GM10248 (cell line): ENCODE measurements at regions of chr10 and their contacts with region 1.

Region 1: DNA sequence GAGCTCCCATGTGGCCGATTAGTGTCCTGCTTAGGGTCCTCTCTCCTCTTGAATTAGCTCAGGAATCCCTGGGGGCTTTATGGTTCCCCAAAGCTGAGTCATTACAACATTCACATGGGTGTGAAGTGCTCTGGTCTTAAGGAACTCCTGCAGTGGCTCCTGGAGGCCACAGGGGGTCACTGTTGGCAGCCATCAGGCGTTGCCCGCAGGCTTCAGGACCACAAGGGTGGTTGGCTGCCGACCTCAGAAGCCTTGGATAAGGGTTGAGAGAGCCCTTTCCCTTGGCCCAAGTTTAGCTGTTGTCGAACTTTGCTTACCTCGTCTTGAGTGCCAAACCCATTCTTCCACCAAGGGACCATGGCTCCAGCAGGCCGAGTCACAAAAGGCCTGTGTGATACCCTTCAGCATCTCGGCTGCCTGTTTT is 61.7 kb downstream of the SH2D4B start:
- DNase-seq: peak; percentile 76
- CTCF ChIP-seq: peak; percentile 85

Region 2: DNA sequence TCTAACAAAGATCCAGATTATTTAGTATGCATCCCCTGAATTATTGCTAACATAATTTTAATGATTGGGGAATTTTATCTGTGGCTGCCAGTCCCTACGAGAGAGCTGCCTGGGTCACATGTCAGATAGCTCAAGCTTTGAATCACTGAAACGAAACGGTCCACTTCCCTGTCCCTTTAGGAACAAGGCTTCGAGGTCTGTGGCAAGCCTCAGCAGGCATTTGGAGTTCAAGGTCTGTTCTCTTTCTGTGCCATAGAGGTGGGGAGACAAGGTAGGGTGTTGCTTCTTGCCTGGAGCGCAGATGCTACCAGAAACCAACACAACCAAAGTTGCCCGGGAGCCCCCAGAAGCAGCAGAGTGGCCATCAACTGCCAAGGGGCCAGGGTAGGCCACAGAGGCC is 75.7 kb before region 1 on chr10:
- CTCF ChIA-PET with region 1: no interaction called
- POLR2A ChIA-PET with region 1: no interaction called
- DNase-seq: no peak
- CTCF ChIP-seq: no peak

Region 3: GRCh38 chr10:80535671-80536365 is 63.6 kb before region 1 on chr10:
- CTCF ChIA-PET with region 1: interaction called, 16 read pairs
- POLR2A ChIA-PET with region 1: no interaction called
- DNase-seq: peak; percentile 88
- CTCF ChIP-seq: peak; percentile 94

Region 4: GRCh38 chr10:80612261-80612660 is 12.8 kb after region 1 on chr10:
- CTCF ChIA-PET with region 1: interaction called, 59 read pairs
- POLR2A ChIA-PET with region 1: no interaction called
- DNase-seq: no peak
- CTCF ChIP-seq: no peak

Region 5: GRCh38 chr10:80619036-80619435 is 19.6 kb after region 1 on chr10:
- CTCF ChIA-PET with region 1: interaction called, 17 read pairs
- POLR2A ChIA-PET with region 1: no interaction called
- DNase-seq: no peak
- CTCF ChIP-seq: no peak